ENCODE measurements at regions of chr19 and their contacts with region 1.

Region 1: DNA sequence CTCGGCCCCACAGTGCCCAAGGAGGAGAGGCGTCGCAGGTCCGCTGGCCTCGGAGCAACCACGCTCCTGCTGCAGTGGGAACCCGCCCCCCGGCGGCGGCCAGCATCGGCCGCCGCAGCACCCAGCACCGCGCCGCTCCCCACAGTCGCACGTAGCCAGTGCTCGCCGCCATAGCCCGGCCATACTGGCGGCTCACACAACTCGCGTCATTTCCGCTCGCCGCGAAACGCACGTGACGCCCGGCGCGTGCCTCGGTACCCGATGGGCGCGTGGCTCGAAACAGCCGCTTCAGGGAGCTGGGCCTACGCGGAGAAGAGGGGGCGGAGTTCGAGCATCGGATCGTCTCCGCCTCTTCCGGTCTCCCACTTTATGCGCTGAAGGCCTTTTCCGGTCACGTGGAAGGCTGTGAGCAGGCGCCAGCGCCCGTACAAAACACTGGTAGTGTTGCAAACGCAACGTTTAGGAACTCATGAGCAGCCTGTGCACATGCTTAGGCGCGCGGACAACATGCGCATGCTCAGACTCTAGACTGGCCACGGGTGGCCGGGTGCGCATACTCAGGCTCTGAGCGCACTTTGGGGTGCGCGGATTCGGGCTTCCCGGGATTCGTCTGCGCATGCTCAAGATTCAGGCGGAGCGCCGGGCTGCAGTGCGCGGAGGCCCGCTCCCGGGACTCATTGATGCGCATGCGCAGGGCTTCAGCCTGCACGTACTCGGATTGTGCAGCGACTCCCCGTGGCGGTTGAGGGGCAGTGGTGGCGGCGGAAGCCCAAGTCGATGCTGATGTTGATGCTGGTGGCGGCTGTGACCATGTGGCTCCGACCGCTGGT is at the starts of genes CATSPERD and LONP1:
- DNase-seq: peak; percentile 99
- ATAC-seq: peak; percentile 84
- H3K4me3 Mint-ChIP-seq: peak within 1 kb of the TSS; percentile 98
- H3K27ac Mint-ChIP-seq: peak within 1 kb of the TSS; percentile 99
- H3K4me1 Mint-ChIP-seq: peaks cover 27% of the 10 kb centered on the region
- H3K27me3 Mint-ChIP-seq: no peaks in the 10 kb centered on the region
- total RNA-seq, gene CATSPERD: not detected
- total RNA-seq, gene LONP1: 287 to 315 TPM

Region 2: GRCh38 chr19:4723367-4724187 is 996.6 kb before region 1 on chr19 and contains the start of gene DPP9:
- CTCF ChIA-PET with region 1: no interaction called
- POLR2A ChIA-PET with region 1: no interaction called
- intact Hi-C with region 1: loop called in 1 of 2 experiments (anchors 1 kb)
- DNase-seq: peak; percentile 98
- ATAC-seq: peak; percentile 95
- H3K4me3 Mint-ChIP-seq: peak within 1 kb of the TSS; percentile 92
- H3K27ac Mint-ChIP-seq: peak within 1 kb of the TSS; percentile 93
- H3K4me1 Mint-ChIP-seq: peaks cover 26% of the 10 kb centered on the region
- H3K27me3 Mint-ChIP-seq: no peaks in the 10 kb centered on the region
- total RNA-seq, gene DPP9: 49.2 to 51.3 TPM

Region 3: GRCh38 chr19:5561559-5561958 is 158.6 kb before region 1 on chr19:
- CTCF ChIA-PET with region 1: no interaction called
- POLR2A ChIA-PET with region 1: no interaction called
- intact Hi-C with region 1: no loop called
- DNase-seq: no peak
- ATAC-seq: no peak
- H3K4me3 Mint-ChIP-seq: no peak overlapping the region
- H3K27ac Mint-ChIP-seq: no peak overlapping the region
- H3K4me1 Mint-ChIP-seq: no peaks in the 10 kb centered on the region
- H3K27me3 Mint-ChIP-seq: peaks cover 24% of the 10 kb centered on the region

Region 4: GRCh38 chr19:5622463-5623396 is 97.4 kb before region 1 on chr19 and contains the starts of genes SAFB and SAFB2:
- CTCF ChIA-PET with region 1: interaction called, 4 read pairs
- POLR2A ChIA-PET with region 1: interaction called, 8 read pairs
- intact Hi-C with region 1: loop called in 1 of 2 experiments (anchors 1 kb)
- DNase-seq: peak; percentile 100
- ATAC-seq: peak; percentile 92
- H3K4me3 Mint-ChIP-seq: peak within 1 kb of the TSS; percentile 100
- H3K27ac Mint-ChIP-seq: peak within 1 kb of the TSS; percentile 100
- H3K4me1 Mint-ChIP-seq: peaks cover 66% of the 10 kb centered on the region
- H3K27me3 Mint-ChIP-seq: no peaks in the 10 kb centered on the region
- total RNA-seq, gene SAFB: 100 to 118 TPM
- total RNA-seq, gene SAFB2: 65.0 to 78.6 TPM

Region 5: DNA sequence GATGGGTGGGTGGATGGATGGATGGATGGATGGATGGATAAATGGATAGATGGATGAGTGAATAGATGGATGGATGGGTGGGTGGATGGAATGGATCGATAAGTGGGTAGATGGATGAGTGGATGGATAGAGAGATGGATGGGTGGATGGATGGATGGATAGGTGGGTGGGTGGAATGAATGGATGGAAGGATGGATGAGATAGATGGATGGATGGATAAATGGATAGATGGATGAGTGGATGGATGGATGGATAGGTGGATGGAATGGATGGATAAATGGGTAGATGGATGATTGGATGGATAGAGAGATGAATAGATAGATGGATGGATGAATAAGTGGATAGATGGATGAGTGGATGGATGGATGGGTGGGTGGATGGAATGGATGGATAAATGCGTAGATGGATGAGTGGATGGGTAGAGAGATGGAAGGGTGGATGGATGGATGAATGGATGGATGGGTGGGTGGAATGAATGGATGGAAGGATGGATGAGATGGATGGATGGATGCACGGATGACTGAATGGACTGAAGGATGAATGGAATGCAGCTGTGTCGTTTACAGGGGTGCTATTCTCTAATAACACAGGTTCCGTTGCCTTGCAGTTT is 42.5 kb after region 1 on chr19:
- CTCF ChIA-PET with region 1: no interaction called
- POLR2A ChIA-PET with region 1: no interaction called
- intact Hi-C with region 1: no loop called
- DNase-seq: no peak
- ATAC-seq: no peak
- H3K4me3 Mint-ChIP-seq: no peak overlapping the region
- H3K27ac Mint-ChIP-seq: no peak overlapping the region
- H3K4me1 Mint-ChIP-seq: no peaks in the 10 kb centered on the region
- H3K27me3 Mint-ChIP-seq: peaks cover 9% of the 10 kb centered on the region

Region 6: DNA sequence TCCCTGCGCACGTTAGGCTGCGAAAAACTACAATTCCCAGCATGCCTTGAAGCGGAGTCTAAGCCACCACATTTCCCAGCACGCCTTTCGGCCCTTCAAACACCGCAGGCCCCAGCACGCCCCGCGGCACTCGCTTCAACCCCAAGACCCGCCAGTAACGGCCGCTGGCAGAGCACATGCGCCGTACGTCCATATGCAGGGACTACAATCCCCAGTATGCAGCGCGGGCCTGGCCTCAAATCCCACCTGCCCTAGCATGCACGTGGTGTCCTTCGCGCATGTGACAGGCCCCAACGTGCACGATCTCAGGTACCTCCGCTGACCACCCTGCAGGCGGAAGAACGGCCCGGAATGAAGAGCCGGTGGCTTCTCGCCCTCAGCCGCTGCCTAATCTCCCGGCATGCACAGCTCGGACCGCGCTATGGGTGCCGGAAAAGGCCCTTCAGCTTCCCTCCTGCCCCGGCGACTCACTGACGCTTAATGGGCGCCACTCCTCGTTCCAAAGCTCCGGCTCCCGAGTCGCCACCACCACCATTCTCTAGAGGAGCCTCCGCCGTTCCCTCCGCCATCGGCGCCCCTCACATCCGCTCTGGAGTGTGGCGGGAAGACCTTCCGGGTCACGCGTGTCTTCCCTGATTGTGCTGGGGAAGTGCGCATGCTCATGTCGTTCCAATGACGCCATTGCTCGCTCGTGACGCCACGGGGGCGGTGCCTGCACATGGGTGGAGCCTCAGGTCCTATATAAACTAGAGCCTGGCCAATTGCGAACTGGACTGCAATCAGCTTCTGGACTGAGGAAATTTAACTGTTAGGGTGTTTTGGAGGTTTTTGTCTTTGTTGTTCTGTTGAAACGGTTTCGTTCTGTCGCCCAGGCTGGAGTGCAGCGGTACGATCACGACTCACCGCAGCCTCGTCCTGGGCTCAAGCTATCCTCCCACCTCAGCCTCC is 70.7 kb after region 1 on chr19 and contains the start of gene DUS3L:
- CTCF ChIA-PET with region 1: interaction called, 5 read pairs
- POLR2A ChIA-PET with region 1: interaction called, 3 read pairs
- intact Hi-C with region 1: loop called (anchors 1 kb)
- DNase-seq: peak; percentile 98
- ATAC-seq: peak; percentile 97
- H3K4me3 Mint-ChIP-seq: peak within 1 kb of the TSS; percentile 98
- H3K27ac Mint-ChIP-seq: peak within 1 kb of the TSS; percentile 100
- H3K4me1 Mint-ChIP-seq: peaks cover 13% of the 10 kb centered on the region
- H3K27me3 Mint-ChIP-seq: no peaks in the 10 kb centered on the region
- total RNA-seq, gene DUS3L: 59.4 to 63.9 TPM

Region 7: DNA sequence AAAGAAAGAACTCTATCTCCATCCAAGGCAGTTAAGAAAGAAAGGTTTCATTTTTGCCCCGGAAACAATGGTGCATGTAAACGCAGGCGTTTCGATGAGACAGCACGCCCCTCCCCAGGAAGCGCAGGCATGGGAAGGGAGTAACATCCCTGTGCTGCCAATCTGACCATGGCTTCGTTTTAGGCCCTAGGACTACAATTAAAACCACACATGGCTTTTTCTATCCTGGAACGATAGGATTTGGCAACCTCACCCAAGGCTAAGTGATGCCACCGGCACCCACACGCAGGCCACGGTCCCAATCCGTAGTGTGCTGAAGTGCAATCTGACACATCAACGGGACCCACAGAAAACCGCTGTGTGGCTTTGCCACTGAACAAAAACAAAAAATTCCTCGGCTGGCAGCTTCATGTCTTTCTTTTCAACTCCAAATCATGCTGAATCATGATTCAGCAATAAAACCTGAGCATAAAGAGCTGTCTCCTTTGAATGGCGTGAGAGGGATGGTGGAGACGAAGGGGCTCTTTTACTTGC is 233.6 kb after region 1 on chr19:
- CTCF ChIA-PET with region 1: no interaction called
- POLR2A ChIA-PET with region 1: interaction called, 3 read pairs
- intact Hi-C with region 1: loop called in 1 of 2 experiments (anchors 5 kb)
- DNase-seq: peak; percentile 72
- ATAC-seq: peak; percentile 35
- H3K4me3 Mint-ChIP-seq: peak overlapping the region; percentile 53
- H3K27ac Mint-ChIP-seq: peak overlapping the region; percentile 98
- H3K4me1 Mint-ChIP-seq: peaks cover 93% of the 10 kb centered on the region
- H3K27me3 Mint-ChIP-seq: no peaks in the 10 kb centered on the region

Region 8: DNA sequence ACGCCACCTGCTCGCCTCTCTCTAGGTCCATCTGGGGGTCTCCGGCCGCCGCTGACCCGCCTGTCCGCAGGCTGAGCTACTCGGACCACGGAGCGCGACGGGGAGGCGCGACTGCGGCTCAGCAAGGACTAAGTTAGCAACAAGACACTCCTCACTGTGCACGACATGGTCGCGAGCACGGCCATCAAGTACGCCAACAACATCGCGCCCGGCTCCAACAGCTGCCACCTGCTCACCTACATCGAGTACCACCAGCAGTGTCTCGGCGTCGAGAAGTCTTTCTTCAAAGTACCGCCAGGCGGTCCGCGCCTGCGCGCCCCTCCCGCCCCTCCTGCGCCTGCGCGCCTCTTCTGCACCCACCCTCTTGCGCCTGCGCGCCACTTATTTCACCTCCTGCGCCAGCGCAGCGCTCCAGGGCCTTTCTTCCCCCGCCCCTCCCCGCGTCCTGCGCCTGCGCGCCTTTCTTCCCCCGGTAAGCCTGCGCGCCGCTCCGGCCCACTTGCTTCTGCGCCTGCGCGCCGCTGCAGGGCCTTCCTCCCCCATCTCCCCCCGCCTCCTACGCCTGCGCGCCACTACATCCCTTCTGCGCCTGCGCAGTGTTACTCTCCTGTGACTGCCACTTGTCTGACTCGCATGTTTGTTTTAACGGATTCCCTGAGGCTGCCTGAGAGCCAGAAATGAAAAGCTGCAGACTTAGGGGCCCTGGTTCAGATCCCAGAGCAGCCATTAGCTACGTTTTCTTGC is 479.2 kb after region 1 on chr19:
- CTCF ChIA-PET with region 1: no interaction called
- POLR2A ChIA-PET with region 1: no interaction called
- intact Hi-C with region 1: loop called in 1 of 2 experiments (anchors 1 kb)
- DNase-seq: peak; percentile 100
- ATAC-seq: peak; percentile 95
- H3K4me3 Mint-ChIP-seq: peak overlapping the region; percentile 100
- H3K27ac Mint-ChIP-seq: peak overlapping the region; percentile 92
- H3K4me1 Mint-ChIP-seq: peaks cover 12% of the 10 kb centered on the region
- H3K27me3 Mint-ChIP-seq: no peaks in the 10 kb centered on the region

Measured in activated CD4-positive, alpha-beta T cell treated with anti-CD3 and anti-CD28 coated beads for 36 hours (primary cell).